ENCODE measurements at regions of chr10 and their contacts with region 1.

Region 1: DNA sequence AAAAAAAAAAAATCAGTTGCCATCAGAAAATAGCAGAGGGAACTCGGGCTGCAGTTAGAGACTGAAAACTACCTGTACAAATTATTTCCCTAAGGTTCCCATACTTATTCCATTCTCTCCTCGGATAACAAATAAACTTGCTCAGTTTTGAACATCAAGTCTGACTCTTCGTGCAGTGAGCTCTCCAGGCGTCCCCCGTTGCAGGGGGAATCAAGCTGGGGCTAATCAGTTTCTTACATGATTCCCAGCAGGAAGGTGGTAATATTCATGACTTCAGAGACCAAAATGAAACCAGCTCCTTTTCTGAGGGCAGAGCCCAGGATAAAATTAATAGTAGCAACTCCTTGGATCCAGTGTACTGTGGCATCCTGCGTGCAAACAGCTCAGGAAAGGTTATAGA is 135.3 kb downstream of the FRMD4A start:
- DNase-seq: no peak
- ATAC-seq: no peak
- H3K4me3 ChIP-seq: no peak overlapping the region
- H3K27ac ChIP-seq: no peak overlapping the region
- H3K4me1 ChIP-seq: no peaks in the 10 kb centered on the region
- CTCF ChIP-seq: no peak
- EP300 ChIP-seq: no peak
- POLR2A ChIP-seq: no peak
- RAD21 ChIP-seq: no peak

Region 2: DNA sequence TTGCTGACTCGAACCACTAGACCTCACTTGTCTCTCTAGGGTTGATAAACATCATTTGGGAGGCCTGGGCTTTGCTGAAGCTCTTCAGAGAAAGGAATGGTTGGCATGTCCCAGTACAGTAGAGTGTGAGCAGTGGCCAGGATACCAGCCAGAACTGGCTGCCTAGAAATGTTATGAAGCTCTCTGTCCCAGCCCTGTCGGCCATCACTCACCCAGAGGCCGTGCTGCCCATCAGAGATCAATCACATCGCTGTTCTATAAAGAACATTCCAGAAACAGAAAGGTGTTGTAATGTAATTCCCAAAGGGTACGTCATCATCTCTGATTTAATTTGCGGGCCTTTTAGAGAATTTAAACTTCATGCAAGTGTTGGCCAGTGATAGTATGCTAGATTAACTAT is 497.2 kb before region 1 on chr10:
- CTCF ChIA-PET with region 1: no interaction called
- POLR2A ChIA-PET with region 1: no interaction called
- DNase-seq: no peak
- ATAC-seq: no peak
- H3K4me3 ChIP-seq: no peak overlapping the region
- H3K27ac ChIP-seq: no peak overlapping the region
- H3K4me1 ChIP-seq: peaks cover 14% of the 10 kb centered on the region; the same call in 2 of the 3 replicates
- CTCF ChIP-seq: no peak
- EP300 ChIP-seq: no peak
- POLR2A ChIP-seq: no peak
- RAD21 ChIP-seq: no peak

Region 3: DNA sequence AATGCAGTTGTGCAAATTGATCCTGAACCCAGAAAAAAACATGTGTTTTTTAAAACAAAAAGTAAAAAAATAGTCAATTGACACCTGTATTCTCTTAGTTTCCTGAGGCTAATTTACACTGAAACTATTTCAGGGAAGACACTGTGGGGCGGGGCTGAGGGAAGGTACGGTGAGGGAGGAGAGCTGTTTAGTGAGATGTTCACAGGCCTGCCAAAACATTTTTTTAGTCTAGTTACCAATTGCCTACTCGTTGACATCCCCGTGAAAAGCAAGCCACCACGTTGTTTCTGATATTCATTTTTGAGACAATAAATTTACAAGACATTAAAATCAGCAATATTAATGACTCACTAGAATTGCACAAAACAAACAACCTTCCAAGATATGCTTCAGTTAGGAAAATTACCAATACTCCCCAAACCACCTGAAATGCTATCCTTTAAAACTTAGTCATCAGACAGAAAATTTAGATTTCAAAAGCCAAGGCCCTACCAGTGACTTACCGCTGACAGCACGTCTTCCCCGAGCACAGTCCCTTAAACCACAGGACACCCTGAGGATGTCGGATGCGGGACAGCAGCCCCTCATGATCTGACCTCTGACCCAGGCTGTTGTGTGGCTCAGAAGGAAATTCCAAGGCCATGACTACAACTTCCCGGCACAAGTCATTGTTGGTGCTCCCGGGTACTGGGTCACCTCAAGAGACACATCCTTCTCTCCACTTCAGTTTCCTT is 329.5 kb before region 1 on chr10:
- CTCF ChIA-PET with region 1: no interaction called
- POLR2A ChIA-PET with region 1: no interaction called
- DNase-seq: peak; percentile 69 to 76
- ATAC-seq: peak; percentile 83 to 87
- H3K4me3 ChIP-seq: no peak overlapping the region; the same call in 2 of the 3 replicates
- H3K27ac ChIP-seq: peak overlapping the region; percentile 48 to 77
- H3K4me1 ChIP-seq: peaks cover 20% of the 10 kb centered on the region
- CTCF ChIP-seq: no peak
- EP300 ChIP-seq: no peak
- POLR2A ChIP-seq: no peak
- RAD21 ChIP-seq: no peak

Region 4: DNA sequence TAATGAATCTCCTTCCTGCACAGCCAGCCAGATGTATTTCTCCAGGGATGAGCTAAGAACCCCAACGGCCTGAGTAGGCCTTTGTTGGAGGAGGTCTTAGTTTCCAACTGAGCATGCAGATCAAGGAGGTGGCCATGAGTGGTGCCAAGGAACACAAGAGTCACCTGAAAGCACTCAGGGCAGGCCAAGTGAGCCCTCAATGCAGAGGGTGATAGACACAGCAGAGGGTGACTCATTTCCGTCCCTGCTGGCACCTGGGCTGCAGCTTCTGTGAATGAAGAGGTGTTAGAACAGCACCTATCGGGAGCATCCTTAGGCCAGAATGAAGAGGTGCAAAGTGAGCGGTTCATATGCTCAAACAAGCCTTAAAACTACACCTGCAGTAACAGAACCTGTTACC is 76.5 kb before region 1 on chr10:
- CTCF ChIA-PET with region 1: no interaction called
- POLR2A ChIA-PET with region 1: no interaction called
- DNase-seq: no peak
- ATAC-seq: no peak
- H3K4me3 ChIP-seq: no peak overlapping the region
- H3K27ac ChIP-seq: no peak overlapping the region
- H3K4me1 ChIP-seq: no peaks in the 10 kb centered on the region
- CTCF ChIP-seq: no peak
- EP300 ChIP-seq: no peak
- POLR2A ChIP-seq: no peak
- RAD21 ChIP-seq: no peak

Region 5: GRCh38 chr10:14153570-14154055 is 41.8 kb before region 1 on chr10:
- CTCF ChIA-PET with region 1: no interaction called
- POLR2A ChIA-PET with region 1: no interaction called
- DNase-seq: peak in 1 of 2 experiments; percentile 19
- ATAC-seq: peak in 1 of 2 experiments; percentile 30; a peak in 2 of 6 replicates
- H3K4me3 ChIP-seq: peak overlapping the region; percentile 24; the same call in 1 of the 3 replicates
- H3K27ac ChIP-seq: no peak overlapping the region
- H3K4me1 ChIP-seq: no peaks in the 10 kb centered on the region
- CTCF ChIP-seq: no peak
- EP300 ChIP-seq: no peak
- POLR2A ChIP-seq: no peak
- RAD21 ChIP-seq: no peak

Region 6: DNA sequence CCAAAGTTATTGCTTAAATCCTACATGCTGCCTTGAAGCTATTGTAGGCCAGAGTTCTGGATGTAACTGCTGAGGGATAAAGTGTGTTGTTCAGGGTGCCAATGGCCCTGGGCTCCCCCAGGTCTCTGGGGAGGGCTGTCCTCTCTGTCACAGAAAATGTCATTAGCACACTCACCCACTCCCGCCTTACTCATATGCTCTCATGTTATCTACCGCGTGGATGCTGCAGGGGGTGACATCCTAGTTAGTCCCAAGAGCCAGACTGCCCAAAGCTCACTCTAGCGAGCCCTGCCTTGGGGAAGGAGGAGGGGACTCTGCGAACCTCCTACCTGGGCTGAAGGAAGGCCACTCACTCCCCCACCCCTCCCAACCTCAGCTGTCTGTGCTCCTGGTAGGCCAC is 12.8 kb after region 1 on chr10:
- CTCF ChIA-PET with region 1: interaction called, 23 read pairs
- POLR2A ChIA-PET with region 1: no interaction called
- DNase-seq: no peak
- ATAC-seq: no peak
- H3K4me3 ChIP-seq: no peak overlapping the region
- H3K27ac ChIP-seq: no peak overlapping the region
- H3K4me1 ChIP-seq: no peaks in the 10 kb centered on the region
- CTCF ChIP-seq: no peak
- EP300 ChIP-seq: no peak
- POLR2A ChIP-seq: no peak
- RAD21 ChIP-seq: no peak

Region 7: GRCh38 chr10:14225379-14226150 is 30.1 kb after region 1 on chr10:
- CTCF ChIA-PET with region 1: interaction called, 10 read pairs
- POLR2A ChIA-PET with region 1: no interaction called
- DNase-seq: no peak
- ATAC-seq: no peak
- H3K4me3 ChIP-seq: no peak overlapping the region
- H3K27ac ChIP-seq: no peak overlapping the region
- H3K4me1 ChIP-seq: no peaks in the 10 kb centered on the region
- CTCF ChIP-seq: no peak
- EP300 ChIP-seq: no peak
- POLR2A ChIP-seq: no peak
- RAD21 ChIP-seq: no peak

Region 8: GRCh38 chr10:14478604-14479003 is 283.2 kb after region 1 on chr10:
- CTCF ChIA-PET with region 1: interaction called, 13 read pairs
- POLR2A ChIA-PET with region 1: no interaction called
- DNase-seq: peak; percentile 28 to 49
- ATAC-seq: peak; percentile 68 to 83; a peak in 4 of 6 replicates
- H3K4me3 ChIP-seq: no peak overlapping the region
- H3K27ac ChIP-seq: no peak overlapping the region
- H3K4me1 ChIP-seq: no peaks in the 10 kb centered on the region; the same call in 2 of the 3 replicates
- CTCF ChIP-seq: peak; percentile 48
- EP300 ChIP-seq: no peak
- POLR2A ChIP-seq: no peak
- RAD21 ChIP-seq: peak; percentile 65 to 66

Measured in A549 (cell line).